Right lobe of liver (tissue), 6 donors: ENCODE measurements at regions of chr5 and their contacts with region 1.

Region 1: DNA sequence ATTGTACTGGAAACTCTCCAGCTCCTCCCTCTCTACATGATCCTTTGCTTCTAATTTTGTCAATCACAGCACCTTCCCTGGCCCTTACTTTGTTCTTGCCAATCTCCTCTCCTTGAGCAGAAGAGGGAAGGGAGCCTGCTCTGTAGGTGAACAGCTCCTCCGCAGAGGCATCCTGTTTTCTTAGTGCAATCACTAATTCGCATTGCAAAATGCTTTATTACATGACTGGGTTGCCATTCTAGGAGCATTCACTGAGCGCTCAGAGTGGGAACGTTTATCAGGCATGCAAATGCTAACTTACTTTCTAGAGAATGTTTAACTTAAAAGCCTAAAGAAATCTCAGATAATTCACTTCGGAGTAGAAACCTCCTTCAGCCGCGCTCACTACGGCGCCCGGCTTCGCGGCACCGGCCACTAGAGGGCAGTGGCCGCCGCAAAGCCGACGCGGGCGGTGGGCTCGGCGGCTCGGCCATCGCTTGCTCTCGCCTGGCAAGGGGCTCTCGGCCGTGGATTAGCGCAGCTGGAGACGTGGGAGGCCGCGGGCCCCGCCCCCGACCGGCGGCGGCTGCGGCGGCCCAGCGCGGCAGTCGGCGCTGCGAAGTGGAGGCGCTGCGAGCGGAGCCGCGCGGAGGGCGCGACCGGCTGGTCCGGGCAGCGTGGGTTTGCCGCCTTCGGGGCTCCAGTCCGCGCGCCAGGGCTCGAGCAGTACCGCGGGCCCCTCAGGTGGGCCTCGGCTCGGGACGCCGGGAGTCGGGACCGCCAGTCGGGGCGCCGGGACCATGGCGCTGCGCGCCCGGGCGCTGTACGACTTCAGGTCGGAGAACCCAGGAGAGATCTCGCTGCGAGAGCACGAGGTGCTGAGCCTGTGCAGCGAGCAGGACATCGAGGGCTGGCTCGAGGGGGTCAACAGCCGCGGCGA is at the start of gene SNX18:
- DNase-seq: peak; percentile 93 to 95 (median 95)
- ATAC-seq: peak; percentile 89 to 95 (median 92)
- H3K4me3 ChIP-seq: peak within 1 kb of the TSS; percentile 88 to 99 (median 94)
- H3K27ac ChIP-seq: peak within 1 kb of the TSS; percentile 83 to 96 (median 95)
- H3K4me1 ChIP-seq: peaks cover 0 to 38% (median 6%) of the 10 kb centered on the region in 4 donors
- H3K27me3 ChIP-seq: no peaks in the 10 kb centered on the region
- CTCF ChIP-seq: peak; percentile 87 to 100 (median 96)
- POLR2A ChIP-seq: peak; percentile 96
- total RNA-seq, gene SNX18: 14.1 to 35.3 (median 19.4) TPM

Region 2: DNA sequence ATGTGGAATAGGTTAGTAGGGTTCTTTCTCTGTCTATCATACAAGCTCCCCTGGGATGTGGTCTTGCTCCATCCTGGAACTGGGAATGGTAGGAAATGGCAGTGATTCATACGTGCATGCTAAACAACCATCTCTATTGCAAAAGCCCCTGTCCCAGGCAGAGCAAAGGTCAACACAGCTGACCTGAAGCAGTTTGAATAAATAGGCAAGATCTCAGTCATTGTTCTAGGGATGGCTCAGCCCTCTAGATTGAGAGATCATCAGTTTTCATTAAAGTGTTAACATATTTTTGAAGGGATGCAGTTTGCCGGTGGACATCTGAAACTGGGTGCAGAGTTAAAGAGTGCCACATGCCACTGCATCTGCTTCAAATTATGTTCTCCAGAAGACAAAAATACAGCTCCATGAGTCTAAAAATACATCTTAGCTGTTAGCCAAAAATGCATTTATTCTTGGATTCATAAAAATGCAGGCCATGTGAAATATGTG is 243.8 kb after region 1 on chr5:
- intact Hi-C with region 1: loop called in 1 of 2 experiments (anchors 10 kb)
- DNase-seq: no peak
- ATAC-seq: peak in 3 of 4 donors; percentile 33 to 91 (median 70)
- H3K4me3 ChIP-seq: no peak overlapping the region
- H3K27ac ChIP-seq: no peak overlapping the region
- H3K4me1 ChIP-seq: no peaks in the 10 kb centered on the region
- H3K27me3 ChIP-seq: no peaks in the 10 kb centered on the region
- CTCF ChIP-seq: no peak
- POLR2A ChIP-seq: no peak

Region 3: DNA sequence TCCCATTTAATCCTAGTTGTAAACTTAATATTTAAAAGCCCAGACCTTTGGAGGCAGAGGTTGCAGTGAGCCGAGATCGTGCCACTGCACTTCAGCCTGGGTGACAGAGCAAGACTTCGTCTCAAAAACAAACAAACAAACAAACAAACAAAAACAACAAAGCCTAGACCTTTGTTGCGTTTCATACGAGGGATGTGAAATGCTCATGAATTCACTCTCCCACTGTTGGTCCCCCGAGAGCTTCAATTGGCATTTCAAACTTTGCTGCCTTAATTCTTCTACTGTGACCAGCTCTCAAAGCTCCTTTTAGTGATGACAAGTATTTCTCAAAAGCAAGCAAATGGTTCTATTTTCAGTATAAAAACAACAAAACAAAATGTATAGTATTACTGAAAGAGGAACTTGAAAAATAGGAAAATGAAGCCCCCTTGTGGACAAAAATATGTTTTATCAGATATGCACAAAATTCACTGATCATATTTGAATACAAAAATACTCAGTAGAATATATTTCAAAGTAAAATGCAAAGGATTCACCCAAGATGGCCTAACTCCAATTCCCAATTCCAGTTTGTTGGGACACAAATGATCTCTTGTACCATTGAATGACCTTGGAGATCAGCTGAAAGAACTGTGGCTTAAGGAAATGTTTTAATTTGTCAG is 327.6 kb after region 1 on chr5:
- intact Hi-C with region 1: loop called (anchors 5 to 10 kb)
- DNase-seq: no peak
- ATAC-seq: peak in 3 of 4 donors; percentile 65 to 79 (median 79)
- H3K4me3 ChIP-seq: peak overlapping the region; percentile 8 to 33 (median 25)
- H3K27ac ChIP-seq: peak overlapping the region in 2 of 3 donors; percentile 7 to 18
- H3K4me1 ChIP-seq: peaks cover 0 to 4% (median under 1%) of the 10 kb centered on the region in 4 donors
- H3K27me3 ChIP-seq: no peaks in the 10 kb centered on the region
- CTCF ChIP-seq: peak; percentile 60 to 79 (median 64)
- POLR2A ChIP-seq: no peak